WTC11 (cell line): ENCODE measurements at regions of chr4 and their contacts with region 1.

Region 1: DNA sequence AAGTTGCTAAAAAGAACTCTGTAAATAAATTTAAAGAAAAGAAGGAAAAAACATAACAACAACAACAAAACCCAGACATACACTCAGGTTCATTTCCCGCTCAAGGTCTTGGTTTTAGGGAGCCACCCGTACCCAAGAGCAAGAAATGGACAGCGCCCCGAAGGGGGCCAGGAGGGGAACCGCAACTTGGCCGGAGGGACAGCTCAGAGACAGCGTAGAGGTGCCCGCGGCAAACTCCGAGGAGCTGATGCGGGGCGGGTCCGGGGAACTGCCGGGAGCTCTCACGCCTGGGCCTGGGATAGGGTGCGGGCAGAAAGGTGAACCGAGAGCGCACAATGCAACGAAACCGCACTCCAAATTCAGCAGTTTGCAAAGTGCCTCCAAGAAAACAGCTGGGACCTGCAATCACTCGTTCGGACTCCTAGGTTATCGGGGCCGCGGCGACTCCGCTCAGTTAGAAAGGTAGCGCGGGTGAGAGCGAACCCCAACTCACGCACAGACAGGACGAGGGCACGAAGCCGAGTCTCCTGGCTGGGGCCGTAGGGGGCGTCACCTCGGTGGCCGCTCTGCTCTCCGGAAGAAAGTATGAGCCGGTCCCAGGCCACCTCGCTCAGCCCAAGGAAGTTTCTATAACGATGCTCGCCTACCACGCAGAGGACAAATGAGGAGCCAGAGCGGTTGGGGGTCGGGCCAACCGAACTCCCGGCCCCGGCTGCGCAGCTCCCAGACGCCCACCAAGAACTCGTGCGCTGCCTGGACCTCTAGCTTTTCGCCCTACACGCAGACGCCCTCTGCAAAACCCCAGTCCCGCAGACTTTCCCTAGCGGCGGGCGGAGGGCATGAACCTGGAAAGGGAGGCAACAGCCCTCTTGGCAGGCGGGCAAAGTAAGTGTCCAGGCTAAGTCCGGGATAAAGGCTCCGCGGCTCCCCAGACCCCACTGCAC is 1.4 kb downstream of the NDNF start:
- DNase-seq: peak; percentile 77
- ATAC-seq: peak; percentile 62
- H3K4me3 Mint-ChIP-seq: peak overlapping the region; percentile 72
- H3K27ac Mint-ChIP-seq: no peak overlapping the region
- H3K4me1 Mint-ChIP-seq: peaks cover 29% of the 10 kb centered on the region
- H3K27me3 Mint-ChIP-seq: peaks cover 53% of the 10 kb centered on the region
- CTCF ChIP-seq: no peak

Region 2: DNA sequence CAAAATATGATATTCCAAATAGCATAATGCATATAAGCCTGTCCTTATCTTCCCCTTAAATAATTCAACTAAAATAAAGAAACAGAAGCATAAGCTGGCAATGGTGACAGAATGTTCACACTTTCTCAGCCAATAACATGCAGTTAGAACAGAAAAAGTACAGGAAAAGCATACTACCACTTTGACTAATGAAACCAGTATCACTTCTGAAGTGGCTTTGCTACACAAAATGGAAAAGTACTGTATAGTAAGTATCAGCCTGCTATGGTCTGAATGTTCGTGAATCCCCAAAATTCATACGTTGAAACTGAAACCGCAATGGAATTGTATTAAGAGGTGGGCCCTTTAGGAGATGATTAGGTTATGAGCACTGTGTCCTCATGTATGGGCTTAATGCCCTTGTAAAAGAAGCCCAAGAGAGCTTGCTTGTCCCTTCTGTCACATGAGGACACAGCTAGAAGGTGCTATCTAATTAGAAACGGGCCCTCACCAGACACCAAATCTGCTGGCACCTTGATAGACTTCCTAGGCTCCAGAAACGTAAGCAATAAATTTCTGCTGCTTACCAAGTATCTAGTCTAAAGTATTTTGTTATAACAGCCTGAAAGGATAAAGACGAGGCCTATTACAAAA is 251.0 kb before region 1 on chr4:
- CTCF ChIA-PET with region 1: no interaction called
- POLR2A ChIA-PET with region 1: no interaction called
- DNase-seq: no peak
- ATAC-seq: no peak
- H3K4me3 Mint-ChIP-seq: no peak overlapping the region
- H3K27ac Mint-ChIP-seq: no peak overlapping the region
- H3K4me1 Mint-ChIP-seq: peaks cover 19% of the 10 kb centered on the region
- H3K27me3 Mint-ChIP-seq: no peaks in the 10 kb centered on the region
- CTCF ChIP-seq: no peak

Region 3: DNA sequence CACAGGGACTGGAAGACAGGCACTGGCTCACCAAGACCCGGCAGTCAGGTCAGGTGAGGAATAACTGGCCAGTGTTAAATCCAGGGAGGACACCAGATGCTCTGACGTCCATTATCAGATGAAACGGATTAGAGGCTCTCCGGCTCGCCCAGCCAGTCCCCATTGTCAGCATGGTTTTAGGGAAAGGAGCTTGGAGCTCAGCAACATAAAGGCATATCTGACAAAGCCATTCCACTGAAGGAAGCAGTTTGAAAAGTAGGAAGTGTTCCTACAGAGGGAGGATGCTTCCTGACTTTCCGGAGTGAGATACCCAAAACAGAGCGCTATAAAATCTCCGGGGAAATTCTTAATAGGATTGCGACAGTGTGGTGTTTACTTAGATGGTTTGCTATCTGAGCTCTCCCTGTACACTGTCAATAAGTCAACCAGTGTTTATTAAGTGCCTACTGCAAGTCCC is 13.5 kb before region 1 on chr4:
- CTCF ChIA-PET with region 1: interaction called, 11 read pairs
- POLR2A ChIA-PET with region 1: interaction called, 3 read pairs
- DNase-seq: no peak
- ATAC-seq: peak; percentile 71
- H3K4me3 Mint-ChIP-seq: no peak overlapping the region
- H3K27ac Mint-ChIP-seq: no peak overlapping the region
- H3K4me1 Mint-ChIP-seq: peaks cover 30% of the 10 kb centered on the region
- H3K27me3 Mint-ChIP-seq: no peaks in the 10 kb centered on the region
- CTCF ChIP-seq: no peak

Region 4: DNA sequence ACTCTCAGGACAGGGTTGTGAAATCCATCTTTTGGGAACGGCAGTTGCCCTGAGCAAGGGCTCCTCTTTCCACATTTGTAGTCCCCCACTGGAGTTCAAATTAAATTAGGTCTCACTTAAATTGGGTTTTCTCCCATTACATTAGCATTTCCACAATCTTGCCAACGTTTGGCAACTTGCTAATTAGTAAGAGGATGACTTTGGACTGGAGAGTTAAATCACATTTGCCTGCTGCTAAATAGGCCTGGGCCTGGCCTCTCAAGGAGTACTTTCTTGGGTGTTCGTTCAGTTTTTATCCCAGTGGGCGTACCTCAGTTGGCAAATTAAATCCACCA is 59.3 kb after region 1 on chr4:
- CTCF ChIA-PET with region 1: no interaction called
- POLR2A ChIA-PET with region 1: no interaction called
- DNase-seq: no peak
- ATAC-seq: no peak
- H3K4me3 Mint-ChIP-seq: no peak overlapping the region
- H3K27ac Mint-ChIP-seq: no peak overlapping the region
- H3K4me1 Mint-ChIP-seq: no peaks in the 10 kb centered on the region
- H3K27me3 Mint-ChIP-seq: no peaks in the 10 kb centered on the region
- CTCF ChIP-seq: no peak